ENCODE measurements at regions of chr1 and their contacts with region 1.

Region 1: GRCh38 chr1:72547412-72547811 is 265.1 kb upstream of the NEGR1 start:
- DNase-seq: no peak
- ATAC-seq: no peak
- H3K4me3 ChIP-seq: no peak overlapping the region
- H3K27ac ChIP-seq: no peak overlapping the region
- H3K4me1 ChIP-seq: no peaks in the 10 kb centered on the region
- H3K27me3 ChIP-seq: no peaks in the 10 kb centered on the region
- CTCF ChIP-seq: no peak

Region 2: DNA sequence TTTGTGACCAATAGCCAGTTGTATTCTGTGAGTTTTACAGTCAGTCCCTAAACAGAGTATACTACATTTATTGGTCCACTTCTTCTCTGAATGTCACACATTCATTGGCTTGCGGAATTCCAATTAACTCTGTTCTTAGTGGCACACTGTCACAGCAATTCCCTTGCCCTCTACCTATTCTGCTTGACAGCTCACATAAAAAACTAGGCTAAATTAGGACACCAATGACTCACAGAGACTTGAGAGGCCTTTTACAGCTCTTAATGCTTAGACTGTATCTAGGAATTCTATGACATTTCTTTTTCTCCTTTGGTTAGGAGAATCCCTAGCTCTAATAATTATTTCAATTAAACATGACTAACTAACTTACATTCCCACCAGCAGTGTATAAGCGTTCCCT is 369.1 kb before region 1 on chr1:
- intact Hi-C with region 1: loop called in 1 of 10 experiments (anchors 10 kb)
- DNase-seq: no peak
- ATAC-seq: peak in 3 of 8 donors; percentile 47 to 63 (median 59)
- H3K4me3 ChIP-seq: no peak overlapping the region
- H3K27ac ChIP-seq: no peak overlapping the region
- H3K4me1 ChIP-seq: peaks cover 0 to 9% (median 0%) of the 10 kb centered on the region in 9 donors
- H3K27me3 ChIP-seq: no peaks in the 10 kb centered on the region
- CTCF ChIP-seq: no peak